A673 (cell line): ENCODE measurements at regions of chr20 and their contacts with region 1.

Region 1: DNA sequence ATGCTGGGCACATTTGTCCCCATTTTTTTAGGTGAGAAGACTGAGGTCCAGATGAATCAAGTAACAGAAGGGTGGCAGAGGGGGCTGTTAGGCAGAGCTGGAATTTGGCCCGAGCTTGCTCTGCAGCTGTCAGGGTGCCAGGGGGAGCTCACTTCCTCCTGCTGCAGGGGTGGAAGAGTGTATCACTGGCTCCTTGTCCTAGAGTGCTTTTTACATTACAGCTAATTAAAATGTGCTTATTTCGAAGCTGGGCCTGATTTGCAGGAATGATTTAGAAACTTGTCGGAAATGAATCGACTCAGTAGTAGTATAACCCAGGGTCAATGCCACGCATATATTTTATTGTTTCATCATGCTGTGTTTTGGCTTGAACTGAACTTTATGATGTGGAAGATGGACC is 11.1 kb downstream of the TOX2 start:
- DNase-seq: peak; percentile 92
- H3K4me3 ChIP-seq: peak overlapping the region; percentile 6
- H3K27ac ChIP-seq: peak overlapping the region; percentile 90
- H3K4me1 ChIP-seq: peaks cover 96% of the 10 kb centered on the region
- H3K27me3 ChIP-seq: no peaks in the 10 kb centered on the region
- CTCF ChIP-seq: peak; percentile 30; the same call in 1 of the 2 replicates

Region 2: GRCh38 chr20:43749734-43750294 is 176.0 kb before region 1 on chr20:
- CTCF ChIA-PET with region 1: interaction called, 3 read pairs
- POLR2A ChIA-PET with region 1: no interaction called
- intact Hi-C with region 1: loop called (anchors 2 kb)
- DNase-seq: peak; percentile 78
- H3K4me3 ChIP-seq: no peak overlapping the region
- H3K27ac ChIP-seq: no peak overlapping the region
- H3K4me1 ChIP-seq: peaks cover 20% of the 10 kb centered on the region
- H3K27me3 ChIP-seq: no peaks in the 10 kb centered on the region
- CTCF ChIP-seq: peak; percentile 99

Region 3: DNA sequence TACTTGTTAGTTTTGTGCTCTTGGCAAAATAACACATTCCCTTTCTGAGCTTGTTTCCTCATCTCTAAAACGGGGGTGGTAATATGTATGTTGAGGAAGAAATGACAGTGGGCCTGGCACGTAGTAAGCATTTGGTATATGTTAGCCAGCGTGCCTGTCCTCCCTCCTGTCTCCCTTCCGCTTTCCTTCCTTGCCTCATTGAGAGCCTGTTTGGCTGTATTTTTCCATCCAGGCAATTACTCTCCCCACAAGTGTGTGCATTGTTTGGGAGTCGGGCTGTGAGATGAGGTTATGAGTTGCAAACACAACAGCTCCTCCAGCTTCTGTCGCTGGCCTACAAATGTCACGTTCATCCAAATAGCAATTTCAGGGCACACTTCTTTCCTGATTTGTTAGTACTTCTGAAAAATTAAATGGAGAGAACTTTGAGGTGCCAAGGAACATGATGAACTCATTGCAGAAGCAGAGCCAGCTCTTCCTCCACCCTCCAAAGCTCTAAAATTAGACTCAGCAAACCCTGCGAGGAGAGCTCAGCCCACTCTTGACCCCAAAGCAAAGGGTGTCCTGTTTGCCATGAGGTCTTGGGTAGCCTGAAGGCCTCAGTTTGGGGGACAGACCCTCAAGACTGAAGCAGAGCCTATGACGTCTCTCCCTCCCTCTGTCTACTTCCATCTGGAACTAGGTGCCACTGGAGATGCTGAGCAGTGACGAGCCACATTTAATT is 61.8 kb before region 1 on chr20:
- CTCF ChIA-PET with region 1: no interaction called
- POLR2A ChIA-PET with region 1: no interaction called
- intact Hi-C with region 1: loop called (anchors 5 kb)
- DNase-seq: no peak
- H3K4me3 ChIP-seq: no peak overlapping the region
- H3K27ac ChIP-seq: peak overlapping the region; percentile 3
- H3K4me1 ChIP-seq: peaks cover 5% of the 10 kb centered on the region
- H3K27me3 ChIP-seq: no peaks in the 10 kb centered on the region
- CTCF ChIP-seq: no peak

Region 4: DNA sequence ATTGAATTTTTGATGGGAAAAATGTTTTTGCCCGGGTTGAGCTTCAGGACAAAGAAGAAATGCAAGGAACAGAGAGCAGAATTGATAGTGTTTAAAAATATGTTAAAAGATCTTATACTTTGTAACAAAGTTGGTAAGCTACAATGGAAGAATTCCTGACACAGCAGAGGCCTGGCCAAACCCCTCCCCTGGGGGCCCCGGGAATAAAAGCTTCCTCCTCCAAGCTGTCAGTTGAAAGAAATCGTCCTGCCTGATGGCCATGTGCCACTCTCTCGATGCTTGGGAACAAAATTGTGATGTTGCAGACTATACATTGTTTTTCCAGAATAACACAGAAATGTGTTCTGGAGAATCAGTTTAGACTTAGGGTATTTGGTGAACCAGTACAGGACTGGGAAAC is 25.3 kb before region 1 on chr20:
- CTCF ChIA-PET with region 1: interaction called, 10 read pairs
- POLR2A ChIA-PET with region 1: no interaction called
- intact Hi-C with region 1: no loop called
- DNase-seq: no peak
- H3K4me3 ChIP-seq: no peak overlapping the region
- H3K27ac ChIP-seq: no peak overlapping the region
- H3K4me1 ChIP-seq: no peaks in the 10 kb centered on the region
- H3K27me3 ChIP-seq: no peaks in the 10 kb centered on the region
- CTCF ChIP-seq: no peak

Region 5: DNA sequence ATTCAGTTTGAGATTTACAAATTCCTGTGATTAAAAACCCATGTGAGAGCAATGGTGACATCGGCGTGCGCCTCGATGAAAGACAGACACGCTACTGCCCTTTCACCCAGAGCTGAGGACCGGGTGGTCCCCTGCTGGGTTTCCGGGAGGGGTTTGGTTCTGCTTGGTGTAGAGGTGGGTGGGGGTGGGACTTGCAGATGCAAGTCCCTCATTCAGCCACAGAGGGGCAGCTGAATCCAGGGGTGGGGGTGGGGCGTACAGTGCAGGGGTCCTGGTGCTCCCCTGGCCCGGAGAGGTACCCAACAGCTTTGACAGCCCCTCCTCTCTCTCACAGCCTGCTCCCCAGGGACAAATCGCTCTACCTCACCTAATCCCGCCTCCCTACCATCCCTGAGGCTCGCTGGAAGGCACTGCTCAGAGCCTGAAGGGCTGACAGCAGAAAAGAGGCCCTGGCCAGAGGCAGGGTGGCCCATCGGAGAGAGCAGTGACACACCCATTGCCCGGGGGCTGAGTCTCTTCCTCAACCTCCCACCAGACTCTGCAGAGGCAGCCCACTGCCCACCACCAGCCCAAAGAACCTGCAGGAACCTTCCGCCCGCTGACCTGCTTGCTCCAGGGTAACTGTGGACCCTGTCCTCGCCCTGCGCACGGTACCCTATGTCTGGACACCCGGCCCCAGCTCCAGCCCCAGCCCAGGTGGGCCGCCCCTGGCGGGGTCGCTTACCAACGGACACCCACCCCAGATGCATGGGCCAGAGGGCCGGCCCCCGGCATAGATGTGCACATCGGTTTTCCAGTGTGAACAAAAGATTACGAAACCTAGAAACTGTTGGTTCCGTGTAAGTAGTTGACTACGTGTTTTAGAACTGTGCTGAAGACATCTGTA is 142.8 kb after region 1 on chr20:
- CTCF ChIA-PET with region 1: interaction called, 10 read pairs
- POLR2A ChIA-PET with region 1: no interaction called
- intact Hi-C with region 1: no loop called
- DNase-seq: peak; percentile 35
- H3K4me3 ChIP-seq: no peak overlapping the region
- H3K27ac ChIP-seq: peak overlapping the region; percentile 14
- H3K4me1 ChIP-seq: no peaks in the 10 kb centered on the region
- H3K27me3 ChIP-seq: no peaks in the 10 kb centered on the region
- CTCF ChIP-seq: peak; percentile 29; the same call in 1 of the 2 replicates

Region 6: GRCh38 chr20:44080646-44081267 is 155.0 kb after region 1 on chr20:
- CTCF ChIA-PET with region 1: no interaction called
- POLR2A ChIA-PET with region 1: no interaction called
- intact Hi-C with region 1: loop called (anchors 5 kb)
- DNase-seq: peak; percentile 84
- H3K4me3 ChIP-seq: no peak overlapping the region
- H3K27ac ChIP-seq: peak overlapping the region; percentile 4
- H3K4me1 ChIP-seq: peaks cover 6% of the 10 kb centered on the region
- H3K27me3 ChIP-seq: no peaks in the 10 kb centered on the region
- CTCF ChIP-seq: peak; percentile 98